A549 (cell line): ENCODE measurements at regions of chr5 and their contacts with region 1.

Region 1: DNA sequence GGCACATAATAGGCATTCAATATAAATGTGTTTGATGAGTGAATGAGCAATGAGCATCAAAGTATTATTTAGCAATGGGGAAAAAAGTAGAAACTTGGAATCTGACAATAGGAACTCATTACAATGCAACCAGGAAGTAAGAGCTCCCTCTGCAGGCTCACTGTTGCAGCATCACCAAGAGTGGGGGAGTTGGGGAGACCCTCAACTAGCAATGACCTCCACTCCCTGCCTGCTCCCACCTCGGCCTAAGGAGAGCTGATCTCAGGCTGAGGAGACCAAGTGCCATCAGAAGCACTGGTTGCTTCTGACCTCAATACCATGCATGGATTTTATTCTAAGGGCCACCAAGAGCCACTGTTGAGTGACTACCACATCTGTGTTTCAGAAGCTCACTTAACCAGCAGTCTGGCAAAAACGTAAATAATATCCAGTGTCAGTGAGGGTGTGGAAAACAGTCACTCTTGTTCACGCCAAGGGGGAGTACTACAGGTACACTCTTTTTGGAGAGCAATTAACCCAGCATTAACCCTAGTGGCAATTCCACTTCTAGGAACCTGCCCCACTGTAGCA is 8.0 kb downstream of the VDAC1 start:
- DNase-seq: no peak
- ATAC-seq: peak; percentile 36 to 62; a peak in 4 of 6 replicates
- H3K4me3 ChIP-seq: no peak overlapping the region
- H3K27ac ChIP-seq: no peak overlapping the region
- H3K4me1 ChIP-seq: peaks cover 85% of the 10 kb centered on the region
- CTCF ChIP-seq: peak; percentile 58
- EP300 ChIP-seq: no peak
- POLR2A ChIP-seq: no peak
- RAD21 ChIP-seq: 0 out of 5 replicates have a peak, but pooled peaks of 1 of the 2 experiments have one; percentile 10

Region 2: GRCh38 chr5:133873449-133873848 is 123.3 kb before region 1 on chr5:
- CTCF ChIA-PET with region 1: no interaction called
- POLR2A ChIA-PET with region 1: no interaction called
- DNase-seq: no peak
- ATAC-seq: no peak
- H3K4me3 ChIP-seq: no peak overlapping the region
- H3K27ac ChIP-seq: no peak overlapping the region
- H3K4me1 ChIP-seq: peaks cover 16% of the 10 kb centered on the region; the same call in 1 of the 3 replicates
- CTCF ChIP-seq: no peak
- EP300 ChIP-seq: no peak
- POLR2A ChIP-seq: no peak
- RAD21 ChIP-seq: no peak

Region 3: GRCh38 chr5:133884569-133885311 is 112.0 kb before region 1 on chr5:
- CTCF ChIA-PET with region 1: no interaction called
- POLR2A ChIA-PET with region 1: no interaction called
- DNase-seq: no peak
- ATAC-seq: no peak
- H3K4me3 ChIP-seq: no peak overlapping the region
- H3K27ac ChIP-seq: no peak overlapping the region
- H3K4me1 ChIP-seq: no peaks in the 10 kb centered on the region
- CTCF ChIP-seq: no peak
- EP300 ChIP-seq: no peak
- POLR2A ChIP-seq: no peak
- RAD21 ChIP-seq: no peak

Region 4: GRCh38 chr5:133977161-133977787 is 19.5 kb before region 1 on chr5:
- CTCF ChIA-PET with region 1: interaction called, 91 read pairs
- POLR2A ChIA-PET with region 1: no interaction called
- DNase-seq: no peak
- ATAC-seq: peak in 1 of 2 experiments; percentile 7; a peak in 2 of 6 replicates
- H3K4me3 ChIP-seq: no peak overlapping the region
- H3K27ac ChIP-seq: peak overlapping the region; percentile 70 to 82; a peak in 5 of 6 replicates
- H3K4me1 ChIP-seq: peaks cover 27% of the 10 kb centered on the region
- CTCF ChIP-seq: no peak
- EP300 ChIP-seq: no peak
- POLR2A ChIP-seq: no peak
- RAD21 ChIP-seq: no peak

Region 5: GRCh38 chr5:133985540-133986180 is 11.1 kb before region 1 on chr5:
- CTCF ChIA-PET with region 1: interaction called, 91 read pairs
- POLR2A ChIA-PET with region 1: no interaction called
- DNase-seq: no peak
- ATAC-seq: no peak
- H3K4me3 ChIP-seq: no peak overlapping the region
- H3K27ac ChIP-seq: no peak overlapping the region
- H3K4me1 ChIP-seq: peaks cover 7% of the 10 kb centered on the region; the same call in 2 of the 3 replicates
- CTCF ChIP-seq: no peak
- EP300 ChIP-seq: no peak
- POLR2A ChIP-seq: no peak
- RAD21 ChIP-seq: no peak